ENCODE measurements at regions of chr10 and their contacts with region 1.

Region 1: GRCh38 chr10:102729029-102730026 is 14.4 kb upstream of the WBP1L start:
- DNase-seq: peak; percentile 87 to 93 (median 93)
- H3K4me3 ChIP-seq: no peak overlapping the region
- H3K27ac ChIP-seq: no peak overlapping the region
- H3K4me1 ChIP-seq: no peaks in the 10 kb centered on the region
- H3K27me3 ChIP-seq: no peaks in the 10 kb centered on the region
- CTCF ChIP-seq: peak; percentile 87 to 93 (median 93)
- EP300 ChIP-seq: no peak
- POLR2A ChIP-seq: no peak

Region 2: DNA sequence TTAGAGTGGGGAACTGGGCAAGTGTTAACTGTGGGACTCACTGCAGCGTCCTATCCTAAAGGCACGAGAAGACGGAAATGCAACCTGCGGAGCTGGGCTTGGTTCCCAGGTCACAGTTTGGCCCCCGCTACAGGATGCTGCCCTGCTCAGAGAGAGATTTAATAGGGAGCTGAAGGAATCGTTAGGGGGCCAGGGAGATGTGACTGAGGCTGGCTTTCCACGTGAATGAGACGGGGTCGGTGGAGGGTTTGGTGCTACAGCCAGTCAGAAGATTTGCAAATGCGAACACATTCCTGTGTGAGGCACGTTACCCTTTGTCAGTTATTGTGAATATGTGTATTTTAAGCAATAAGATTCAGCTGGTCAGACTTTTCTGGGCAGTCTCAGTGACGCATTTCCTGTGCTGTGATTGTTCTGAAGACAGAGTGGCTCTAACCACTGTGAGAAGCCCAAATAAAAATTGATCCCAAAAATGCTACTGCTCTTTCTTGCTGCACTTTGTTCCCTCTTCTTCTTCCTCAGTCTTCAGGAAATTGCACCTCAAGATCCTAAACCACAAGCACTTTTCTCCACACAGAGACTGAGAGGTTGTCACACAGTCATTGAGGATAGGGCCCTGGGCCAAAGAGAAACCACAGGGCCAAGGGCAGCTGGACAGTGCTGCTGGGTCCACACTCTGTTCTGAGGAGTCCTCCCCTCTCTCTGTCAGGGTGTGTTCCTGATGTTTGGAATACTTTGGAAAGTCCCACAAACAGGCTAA is 86.6 kb after region 1 on chr10:
- intact Hi-C with region 1: loop called in 2 of 4 experiments (anchors 10 kb)
- DNase-seq: peak; percentile 44 to 69 (median 59)
- H3K4me3 ChIP-seq: no peak overlapping the region
- H3K27ac ChIP-seq: peak overlapping the region; percentile 75 to 84
- H3K4me1 ChIP-seq: peaks cover 16% of the 10 kb centered on the region
- H3K27me3 ChIP-seq: no peaks in the 10 kb centered on the region
- CTCF ChIP-seq: no peak
- EP300 ChIP-seq: no peak
- POLR2A ChIP-seq: peak; percentile 30

Region 3: GRCh38 chr10:102822222-102822621 is 92.9 kb after region 1 on chr10:
- intact Hi-C with region 1: loop called in 2 of 4 experiments (anchors 10 kb)
- DNase-seq: no peak
- H3K4me3 ChIP-seq: no peak overlapping the region
- H3K27ac ChIP-seq: no peak overlapping the region
- H3K4me1 ChIP-seq: no peaks in the 10 kb centered on the region
- H3K27me3 ChIP-seq: no peaks in the 10 kb centered on the region
- CTCF ChIP-seq: no peak
- EP300 ChIP-seq: no peak
- POLR2A ChIP-seq: no peak

Region 4: GRCh38 chr10:102835007-102835482 is 105.7 kb after region 1 on chr10:
- intact Hi-C with region 1: loop called in 1 of 4 experiments (anchors 10 kb)
- DNase-seq: peak; percentile 70 to 84 (median 80)
- H3K4me3 ChIP-seq: no peak overlapping the region
- H3K27ac ChIP-seq: no peak overlapping the region
- H3K4me1 ChIP-seq: no peaks in the 10 kb centered on the region
- H3K27me3 ChIP-seq: no peaks in the 10 kb centered on the region
- CTCF ChIP-seq: peak; percentile 74 to 87 (median 77)
- EP300 ChIP-seq: no peak
- POLR2A ChIP-seq: no peak

Region 5: GRCh38 chr10:102904346-102904745 is 175.0 kb after region 1 on chr10:
- intact Hi-C with region 1: loop called (anchors 2 to 5 kb)
- DNase-seq: no peak
- H3K4me3 ChIP-seq: no peak overlapping the region
- H3K27ac ChIP-seq: no peak overlapping the region
- H3K4me1 ChIP-seq: no peaks in the 10 kb centered on the region
- H3K27me3 ChIP-seq: no peaks in the 10 kb centered on the region
- CTCF ChIP-seq: no peak
- EP300 ChIP-seq: no peak
- POLR2A ChIP-seq: no peak

Region 6: DNA sequence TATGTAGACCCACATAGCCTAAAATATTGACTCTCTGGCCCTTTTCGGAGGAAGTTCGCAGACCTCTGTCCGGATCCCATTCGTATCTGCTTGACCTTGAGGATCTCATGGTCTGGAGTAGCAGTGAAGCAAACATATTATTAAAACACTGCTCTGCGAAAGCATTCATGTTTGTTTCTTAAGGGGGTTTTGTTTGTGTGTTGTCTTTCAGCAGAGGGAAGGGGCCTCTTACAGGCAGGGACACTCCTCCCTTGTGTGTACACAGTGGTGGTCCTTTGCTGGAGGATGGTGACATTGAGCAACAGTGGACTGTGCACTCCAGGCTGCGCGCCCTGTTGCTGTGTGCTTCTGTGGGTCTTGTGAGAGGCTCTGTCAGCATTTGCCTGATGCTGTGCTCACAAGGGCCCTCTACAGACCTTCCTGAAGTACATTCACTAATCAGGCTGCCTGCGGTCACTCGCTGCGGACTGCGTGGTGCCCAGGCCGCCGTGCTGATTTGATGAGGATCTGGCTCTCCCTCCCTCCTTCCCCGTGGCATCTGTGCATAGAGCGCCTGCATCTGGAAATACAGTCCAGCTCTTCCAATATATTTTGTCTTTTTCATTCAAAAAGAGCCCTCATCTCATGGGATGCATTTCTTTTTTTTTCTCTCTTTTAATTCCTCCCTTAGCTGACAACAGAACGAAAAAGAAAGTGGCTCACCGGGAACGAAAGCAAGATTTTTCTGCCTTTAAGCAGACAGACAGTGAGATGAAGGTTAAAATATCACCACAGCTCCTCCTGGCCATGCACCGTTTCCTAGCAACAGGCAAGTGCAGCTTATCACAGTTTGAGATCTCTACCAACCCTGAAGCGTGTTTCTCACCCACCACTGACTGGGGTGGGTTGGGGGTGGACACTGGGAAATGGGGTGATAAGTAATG is 324.6 kb after region 1 on chr10:
- intact Hi-C with region 1: loop called in 1 of 4 experiments (anchors 10 kb)
- DNase-seq: peak; percentile 69 to 77 (median 73)
- H3K4me3 ChIP-seq: peak overlapping the region; percentile 30
- H3K27ac ChIP-seq: peak overlapping the region in 1 of 2 donors; percentile 58
- H3K4me1 ChIP-seq: peaks cover 8% of the 10 kb centered on the region
- H3K27me3 ChIP-seq: no peaks in the 10 kb centered on the region
- CTCF ChIP-seq: peak in 2 of 3 donors; percentile 21 to 27
- EP300 ChIP-seq: no peak
- POLR2A ChIP-seq: peak; percentile 19

Region 7: DNA sequence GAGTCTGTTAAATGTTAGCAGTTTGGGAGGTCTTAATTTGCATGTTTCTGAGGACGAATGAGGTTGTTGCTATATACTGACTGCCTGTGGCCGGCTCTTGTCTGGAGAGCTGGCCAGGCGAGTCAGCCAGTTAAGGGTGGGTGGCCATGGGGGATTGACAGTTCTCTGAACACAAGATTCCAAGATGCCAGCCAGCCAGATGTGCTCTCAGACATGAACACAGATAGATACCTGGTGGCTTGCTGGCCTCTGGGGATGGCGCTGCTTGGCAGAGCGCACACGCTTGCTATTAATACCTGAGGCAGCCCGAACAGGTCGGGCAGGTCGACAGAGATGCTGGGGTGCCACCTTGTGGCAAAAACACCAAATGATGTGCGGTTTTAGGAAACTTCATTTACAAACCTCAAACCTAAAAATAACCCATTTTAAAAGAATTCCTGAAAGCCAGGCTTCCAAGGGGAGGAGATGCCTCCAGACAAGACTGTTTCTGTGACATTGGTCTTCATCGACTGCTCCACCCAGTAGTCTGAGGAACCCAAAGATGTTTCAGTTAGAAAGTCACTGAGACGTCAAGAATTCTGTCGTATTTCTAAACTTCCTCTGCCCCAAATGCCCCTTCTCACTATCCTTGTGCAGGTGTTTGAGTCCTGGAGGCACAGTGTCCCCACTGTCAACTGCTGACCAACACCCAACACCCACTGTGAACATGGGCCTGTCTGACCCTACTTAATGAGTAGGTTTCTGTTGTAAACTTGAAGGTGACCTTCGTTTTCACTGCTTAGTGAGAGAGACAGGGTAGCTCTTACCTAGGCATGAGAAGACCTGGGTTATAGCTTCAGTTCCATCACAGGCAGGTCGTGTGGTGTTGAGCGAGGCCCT is 340.4 kb after region 1 on chr10:
- intact Hi-C with region 1: loop called in 3 of 4 experiments (anchors 10 kb)
- DNase-seq: peak; percentile 54 to 75 (median 73)
- H3K4me3 ChIP-seq: no peak overlapping the region
- H3K27ac ChIP-seq: no peak overlapping the region
- H3K4me1 ChIP-seq: no peaks in the 10 kb centered on the region
- H3K27me3 ChIP-seq: no peaks in the 10 kb centered on the region
- CTCF ChIP-seq: peak; percentile 70 to 74 (median 73)
- EP300 ChIP-seq: no peak
- POLR2A ChIP-seq: no peak

Measured in ovary (tissue), 10 donors.